Breast epithelium (tissue), 4 donors: ENCODE measurements at regions of chr20 and their contacts with region 1.

Region 1: DNA sequence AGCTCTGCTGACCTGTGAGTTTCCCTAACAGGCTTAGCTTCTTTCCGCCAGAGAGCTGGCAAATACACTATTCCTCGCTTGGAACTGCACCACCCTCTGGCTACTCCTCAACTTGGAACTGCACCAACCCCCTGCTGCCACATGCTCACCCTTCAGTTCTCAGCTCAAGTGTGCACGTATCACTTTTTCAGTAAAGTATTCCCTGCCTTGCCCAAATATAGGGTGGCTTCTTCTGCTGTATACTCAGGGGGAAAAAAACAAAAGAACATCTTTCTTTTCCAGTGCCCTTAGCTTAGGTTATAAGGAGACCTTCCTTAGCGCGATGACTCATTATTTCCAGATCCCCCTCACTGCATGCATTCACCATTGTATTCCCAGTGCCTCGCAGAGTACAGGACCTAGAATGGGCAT is 21.2 kb downstream of the GNAS-AS1 start:
- DNase-seq: peak in 1 of 2 donors; percentile 57
- H3K4me3 ChIP-seq: no peak overlapping the region
- H3K27ac ChIP-seq: no peak overlapping the region
- H3K4me1 ChIP-seq: no peaks in the 10 kb centered on the region
- H3K27me3 ChIP-seq: peaks cover 0 to 6% of the 10 kb centered on the region in 2 donors
- CTCF ChIP-seq: peak in 1 of 3 donors; percentile 15
- POLR2A ChIP-seq: no peak

Region 2: DNA sequence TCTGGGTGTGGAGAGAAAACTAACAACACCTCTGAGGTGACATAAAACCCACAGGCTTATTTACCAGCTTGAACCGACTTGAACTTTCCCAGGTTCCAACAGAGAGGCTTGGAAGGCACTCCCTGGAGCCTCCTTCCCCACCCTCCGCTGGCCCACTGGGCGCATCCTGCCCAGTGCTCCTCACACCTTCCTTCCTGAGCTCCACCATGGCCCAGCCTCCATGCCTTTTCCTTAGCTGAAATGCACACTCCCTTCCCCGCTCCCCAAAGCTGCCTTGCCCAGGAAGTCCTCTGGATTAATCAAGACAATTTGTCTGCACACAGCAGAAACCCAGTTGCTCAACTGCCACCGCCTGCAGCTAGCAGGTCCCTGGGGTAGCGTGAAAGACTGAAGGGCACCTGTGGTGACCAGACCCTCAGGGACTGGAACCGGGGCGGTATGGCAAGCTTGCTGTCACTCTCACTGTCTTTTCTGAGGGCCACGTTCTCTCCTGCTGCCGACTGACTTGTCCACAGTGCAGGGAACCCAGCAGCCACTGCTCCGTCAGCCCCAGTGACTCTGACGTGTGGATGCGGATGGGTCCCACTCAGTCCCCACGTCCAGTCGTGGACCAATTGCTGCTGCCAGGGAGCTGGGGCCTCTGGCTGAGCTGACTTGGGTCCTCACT is 1047.0 kb before region 1 on chr20:
- intact Hi-C with region 1: loop called (anchors 5 kb)
- DNase-seq: no peak
- H3K4me3 ChIP-seq: no peak overlapping the region
- H3K27ac ChIP-seq: no peak overlapping the region
- H3K4me1 ChIP-seq: no peaks in the 10 kb centered on the region
- H3K27me3 ChIP-seq: no peaks in the 10 kb centered on the region
- CTCF ChIP-seq: no peak
- POLR2A ChIP-seq: no peak

Region 3: GRCh38 chr20:58888521-58889333 is 59.2 kb after region 1 on chr20:
- intact Hi-C with region 1: no loop called
- DNase-seq: peak; percentile 78 to 82
- H3K4me3 ChIP-seq: peak overlapping the region; percentile 81 to 96 (median 92)
- H3K27ac ChIP-seq: peak overlapping the region; percentile 99 to 100
- H3K4me1 ChIP-seq: peaks cover 0 to 6% of the 10 kb centered on the region in 2 donors
- H3K27me3 ChIP-seq: no peaks in the 10 kb centered on the region
- CTCF ChIP-seq: no peak
- POLR2A ChIP-seq: peak; percentile 21

Region 4: GRCh38 chr20:59701236-59701635 is 871.7 kb after region 1 on chr20:
- intact Hi-C with region 1: loop called (anchors 5 kb)
- DNase-seq: no peak
- H3K4me3 ChIP-seq: no peak overlapping the region
- H3K27ac ChIP-seq: no peak overlapping the region
- H3K4me1 ChIP-seq: no peaks in the 10 kb centered on the region
- H3K27me3 ChIP-seq: peaks cover 0 to 18% of the 10 kb centered on the region in 2 donors
- CTCF ChIP-seq: no peak
- POLR2A ChIP-seq: no peak